IMR-90 (cell line): ENCODE measurements at regions of chr2 and their contacts with region 1.

Region 1: DNA sequence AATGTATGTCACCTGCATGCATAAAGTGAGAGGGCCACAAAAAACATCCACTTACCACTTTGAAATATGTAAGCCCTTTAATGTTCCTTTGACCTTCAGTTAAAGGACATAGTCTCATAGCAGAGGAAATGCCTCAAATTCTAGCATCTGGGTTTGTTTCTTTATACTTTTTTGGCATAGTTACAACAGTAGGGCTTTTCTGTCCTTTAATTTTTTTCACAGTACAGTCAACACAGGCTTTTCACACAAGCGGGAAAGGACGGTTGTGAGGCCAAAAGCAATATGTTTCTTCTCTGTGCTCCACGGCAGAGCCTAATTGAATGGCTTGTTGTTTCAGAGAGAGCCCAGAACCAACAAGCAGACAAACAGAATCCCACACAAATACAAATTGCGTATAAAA is 57.6 kb downstream of the CRIM1 start:
- DNase-seq: peak; percentile 47
- ATAC-seq: no peak; the same call in 1 of the 2 replicates
- H3K4me3 ChIP-seq: no peak overlapping the region
- H3K27ac ChIP-seq: 0 out of 2 replicates have a peak overlapping the region, but pooled peaks have one; percentile 4
- H3K4me1 ChIP-seq: peaks cover 28% of the 10 kb centered on the region
- H3K27me3 ChIP-seq: no peaks in the 10 kb centered on the region
- CTCF ChIP-seq: no peak
- POLR2A ChIP-seq: no peak
- RAD21 ChIP-seq: no peak

Region 2: GRCh38 chr2:36185624-36186023 is 227.6 kb before region 1 on chr2:
- CTCF ChIA-PET with region 1: no interaction called
- POLR2A ChIA-PET with region 1: no interaction called
- dilution Hi-C with region 1: no loop called
- in situ Hi-C with region 1: no loop called
- intact Hi-C with region 1: no loop called
- DNase-seq: no peak
- ATAC-seq: no peak
- H3K4me3 ChIP-seq: no peak overlapping the region
- H3K27ac ChIP-seq: no peak overlapping the region
- H3K4me1 ChIP-seq: no peaks in the 10 kb centered on the region
- H3K27me3 ChIP-seq: no peaks in the 10 kb centered on the region
- CTCF ChIP-seq: no peak
- POLR2A ChIP-seq: no peak
- RAD21 ChIP-seq: no peak

Region 3: GRCh38 chr2:36425608-36426355 is 12.6 kb after region 1 on chr2:
- CTCF ChIA-PET with region 1: interaction called, 3 read pairs
- POLR2A ChIA-PET with region 1: interaction called, 7 read pairs
- dilution Hi-C with region 1: no loop called
- in situ Hi-C with region 1: no loop called
- intact Hi-C with region 1: loop called (anchors 1 kb)
- DNase-seq: no peak
- ATAC-seq: no peak
- H3K4me3 ChIP-seq: no peak overlapping the region
- H3K27ac ChIP-seq: no peak overlapping the region
- H3K4me1 ChIP-seq: peaks cover 28% of the 10 kb centered on the region
- H3K27me3 ChIP-seq: no peaks in the 10 kb centered on the region
- CTCF ChIP-seq: no peak
- POLR2A ChIP-seq: no peak
- RAD21 ChIP-seq: no peak

Region 4: GRCh38 chr2:36444216-36444936 is 31.2 kb after region 1 on chr2:
- CTCF ChIA-PET with region 1: no interaction called
- POLR2A ChIA-PET with region 1: no interaction called
- dilution Hi-C with region 1: no loop called
- in situ Hi-C with region 1: no loop called
- intact Hi-C with region 1: no loop called
- DNase-seq: no peak
- ATAC-seq: no peak
- H3K4me3 ChIP-seq: no peak overlapping the region
- H3K27ac ChIP-seq: no peak overlapping the region; the same call in 1 of the 2 replicates
- H3K4me1 ChIP-seq: peaks cover 23% of the 10 kb centered on the region
- H3K27me3 ChIP-seq: no peaks in the 10 kb centered on the region
- CTCF ChIP-seq: no peak
- POLR2A ChIP-seq: no peak
- RAD21 ChIP-seq: no peak